Activated naive CD4-positive, alpha-beta T cell treated with anti-CD3 and anti-CD28 coated beads, Interleukin-2, amount 10 ng/mL, durations not matched to agents 7 days and 5 days (primary cell): ENCODE measurements at regions of chr16 and their contacts with region 1.

Region 1: GRCh38 chr16:85245307-85246172 is 133.3 kb upstream of the CIBAR2 start:
- DNase-seq: peak; percentile 64
- H3K4me3 Mint-ChIP-seq: no peak overlapping the region
- H3K27ac Mint-ChIP-seq: no peak overlapping the region
- H3K4me1 Mint-ChIP-seq: no peaks in the 10 kb centered on the region
- H3K27me3 Mint-ChIP-seq: peaks cover 30% of the 10 kb centered on the region

Region 2: DNA sequence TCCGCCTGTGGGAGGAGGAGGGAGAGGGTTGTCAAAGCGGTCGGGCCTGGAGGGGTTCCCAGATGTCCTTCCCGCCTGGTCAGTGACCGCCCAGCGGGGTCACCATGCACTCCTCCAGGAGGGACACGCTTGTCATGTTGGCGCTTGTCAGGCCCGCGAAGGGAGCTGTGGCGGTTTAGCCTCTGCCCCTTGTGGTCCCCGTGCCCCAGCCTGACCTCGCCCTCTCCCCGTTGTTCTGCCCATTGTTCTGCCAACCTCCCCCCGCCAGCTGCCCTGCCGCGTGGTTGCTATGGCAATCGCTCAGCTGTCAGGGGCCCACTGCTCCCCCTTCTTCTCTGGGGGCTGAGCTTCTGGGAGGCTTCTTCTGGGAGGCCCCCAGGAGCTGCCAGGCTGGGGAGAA is 13.1 kb after region 1 on chr16:
- CTCF ChIA-PET with region 1: interaction called, 13 read pairs
- DNase-seq: no peak
- H3K4me3 Mint-ChIP-seq: no peak overlapping the region
- H3K27ac Mint-ChIP-seq: no peak overlapping the region
- H3K4me1 Mint-ChIP-seq: peaks cover 1% of the 10 kb centered on the region
- H3K27me3 Mint-ChIP-seq: peaks cover 65% of the 10 kb centered on the region